ENCODE measurements at regions of chr9 and their contacts with region 1.

Region 1: DNA sequence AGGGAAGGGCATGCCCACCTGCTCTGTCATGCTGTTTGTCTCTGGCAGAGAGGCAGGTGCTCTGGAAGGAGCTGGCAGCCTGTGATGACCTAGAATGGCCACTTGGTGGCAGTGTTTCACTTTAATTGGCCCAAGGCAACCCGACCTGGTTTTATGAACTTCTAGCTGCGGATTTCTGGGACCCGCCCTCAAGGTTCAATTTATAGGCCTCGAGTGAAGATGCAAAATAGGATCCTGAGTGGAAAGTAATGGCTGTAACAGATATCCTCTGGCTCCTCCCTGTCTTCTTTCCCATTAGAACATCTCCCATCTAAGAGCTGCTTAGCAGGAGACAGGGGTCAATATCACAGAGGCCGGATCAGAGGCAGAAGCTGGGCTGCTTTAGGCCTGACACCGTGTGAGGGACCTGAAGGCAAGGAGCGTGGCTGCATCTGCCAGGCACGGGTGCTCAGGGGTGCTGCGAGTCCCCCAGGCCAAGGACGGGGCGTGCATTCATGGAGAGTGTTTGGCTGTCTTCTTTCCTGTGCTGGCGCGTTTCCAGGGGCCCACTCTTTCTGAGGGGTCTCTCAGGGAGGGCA is 56.7 kb upstream of the SLC28A3 start:
- DNase-seq: peak; percentile 56
- ATAC-seq: peak; percentile 93

Region 2: GRCh38 chr9:84609779-84610178 is 212.5 kb after region 1 on chr9:
- intact Hi-C with region 1: no loop called
- DNase-seq: no peak
- ATAC-seq: no peak

Region 3: GRCh38 chr9:84953797-84954705 is 556.8 kb after region 1 on chr9:
- intact Hi-C with region 1: loop called (anchors 10 kb)
- DNase-seq: peak; percentile 86
- ATAC-seq: peak; percentile 97

Region 4: GRCh38 chr9:85610074-85610860 is 1213.0 kb after region 1 on chr9:
- intact Hi-C with region 1: loop called (anchors 10 kb)
- DNase-seq: no peak
- ATAC-seq: peak; percentile 88